ENCODE measurements at regions of chr7 and their contacts with region 1.

Region 1: DNA sequence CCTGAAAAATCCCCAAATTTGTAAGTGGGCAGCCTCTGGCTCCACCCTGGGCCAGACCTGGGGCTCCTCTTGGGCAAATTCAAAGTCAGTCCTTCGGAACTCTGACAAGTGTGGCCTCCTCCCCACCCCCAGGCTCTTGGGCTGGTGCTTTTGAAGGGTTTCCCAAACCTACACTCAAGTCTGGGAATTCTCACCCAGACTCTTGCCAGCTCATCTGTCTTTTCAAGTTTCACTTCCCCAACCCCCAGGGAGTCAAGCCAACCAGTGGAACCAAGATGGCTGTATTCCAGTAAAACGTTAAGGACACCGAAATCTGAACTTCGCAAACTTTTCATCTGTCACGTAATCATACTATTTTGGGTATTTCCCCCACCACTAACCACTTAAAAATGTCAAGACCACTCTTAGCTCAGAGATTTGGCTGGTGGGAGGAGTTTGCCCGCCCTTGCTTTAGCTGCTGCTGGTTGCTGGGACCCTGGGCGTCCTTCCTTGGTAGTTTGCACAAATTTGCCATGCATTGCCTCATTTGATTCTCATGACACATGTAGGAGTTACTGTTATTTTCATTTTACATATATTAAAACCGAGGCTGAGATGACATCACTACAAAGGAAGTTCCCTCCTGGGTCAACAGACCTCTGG is 1.7 kb upstream of the MYO1G start:
- DNase-seq: peak; percentile 97
- ATAC-seq: peak; percentile 52
- H3K4me3 Mint-ChIP-seq: peak overlapping the region; percentile 100
- H3K27ac Mint-ChIP-seq: peak overlapping the region; percentile 100
- H3K4me1 Mint-ChIP-seq: peaks cover 60% of the 10 kb centered on the region
- H3K27me3 Mint-ChIP-seq: no peaks in the 10 kb centered on the region
- CTCF ChIP-seq: no peak

Region 2: DNA sequence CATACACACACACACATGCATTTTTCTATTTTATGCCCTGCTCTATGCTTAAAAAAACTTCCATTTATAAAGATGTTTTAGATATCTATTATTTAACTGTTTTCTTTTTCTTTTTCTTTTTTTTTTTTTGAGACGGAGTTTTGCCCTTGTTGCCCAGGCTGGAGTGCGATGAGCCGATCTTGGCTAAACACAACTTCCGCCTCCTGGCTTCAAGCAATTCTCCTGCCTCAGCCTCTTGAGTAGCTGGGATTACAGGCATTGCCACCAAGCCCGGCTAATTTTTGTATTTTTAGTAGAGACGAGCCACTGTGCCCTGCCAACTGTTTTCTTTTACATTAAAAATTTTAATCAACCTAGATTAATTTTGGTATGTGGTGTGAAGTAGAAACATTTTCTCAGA is 49.6 kb before region 1 on chr7:
- CTCF ChIA-PET with region 1: no interaction called
- POLR2A ChIA-PET with region 1: no interaction called
- intact Hi-C with region 1: no loop called
- DNase-seq: no peak
- ATAC-seq: no peak
- H3K4me3 Mint-ChIP-seq: no peak overlapping the region
- H3K27ac Mint-ChIP-seq: no peak overlapping the region
- H3K4me1 Mint-ChIP-seq: no peaks in the 10 kb centered on the region
- H3K27me3 Mint-ChIP-seq: peaks cover 3% of the 10 kb centered on the region
- CTCF ChIP-seq: no peak

Region 3: DNA sequence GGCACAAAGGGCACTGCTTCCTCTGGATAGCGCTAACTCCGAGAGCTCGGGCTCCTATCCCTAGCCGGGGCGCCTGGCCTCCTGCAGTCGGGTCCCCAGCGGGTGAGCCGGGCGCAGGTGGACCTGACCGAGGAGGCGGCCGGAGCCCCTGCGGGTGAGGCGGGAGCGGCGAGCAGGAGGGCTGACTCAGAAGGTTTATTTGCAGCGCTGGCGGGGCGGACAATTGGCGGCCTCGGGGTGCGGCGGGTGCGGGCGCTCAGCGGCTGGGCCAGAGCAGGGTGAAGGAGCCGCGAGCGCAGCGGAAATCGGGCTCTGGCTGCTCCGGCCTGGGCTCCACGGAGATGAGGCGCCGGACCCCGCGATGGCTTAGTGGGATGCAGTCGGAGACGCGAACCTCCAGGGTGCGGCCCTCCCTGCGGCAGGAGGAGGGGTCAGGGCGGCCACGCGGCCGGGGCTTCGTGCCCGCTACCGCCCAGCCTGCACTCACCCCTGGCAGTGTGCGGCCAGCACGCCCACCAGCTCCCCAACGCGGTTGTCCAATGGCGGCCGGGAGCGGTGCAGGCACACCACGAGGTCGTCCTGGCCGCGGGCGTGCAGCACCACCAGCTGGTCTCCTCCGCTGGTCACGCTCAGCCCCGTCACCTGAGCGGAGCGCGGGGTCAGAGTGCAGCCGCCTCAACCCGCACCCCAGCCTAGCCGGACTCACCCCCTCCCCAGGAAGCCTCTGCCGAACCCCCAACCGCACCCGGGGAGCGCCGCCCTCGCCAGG is 17.8 kb before region 1 on chr7:
- CTCF ChIA-PET with region 1: interaction called, 4 read pairs
- POLR2A ChIA-PET with region 1: interaction called, 317 read pairs
- intact Hi-C with region 1: no loop called
- DNase-seq: peak; percentile 28
- ATAC-seq: no peak
- H3K4me3 Mint-ChIP-seq: no peak overlapping the region
- H3K27ac Mint-ChIP-seq: no peak overlapping the region
- H3K4me1 Mint-ChIP-seq: peaks cover 19% of the 10 kb centered on the region
- H3K27me3 Mint-ChIP-seq: no peaks in the 10 kb centered on the region
- CTCF ChIP-seq: no peak

Region 4: GRCh38 chr7:45033261-45033930 is 52.9 kb after region 1 on chr7:
- CTCF ChIA-PET with region 1: interaction called, 4 read pairs
- POLR2A ChIA-PET with region 1: interaction called, 30 read pairs
- intact Hi-C with region 1: no loop called
- DNase-seq: peak; percentile 51
- ATAC-seq: peak; percentile 55
- H3K4me3 Mint-ChIP-seq: peak overlapping the region; percentile 11
- H3K27ac Mint-ChIP-seq: peak overlapping the region; percentile 85
- H3K4me1 Mint-ChIP-seq: peaks cover 78% of the 10 kb centered on the region
- H3K27me3 Mint-ChIP-seq: no peaks in the 10 kb centered on the region
- CTCF ChIP-seq: no peak

Region 5: GRCh38 chr7:45157653-45158401 is 177.3 kb after region 1 on chr7 and contains the start of gene RAMP3:
- CTCF ChIA-PET with region 1: no interaction called
- POLR2A ChIA-PET with region 1: no interaction called
- intact Hi-C with region 1: no loop called
- DNase-seq: no peak
- ATAC-seq: no peak
- H3K4me3 Mint-ChIP-seq: no peak within 1 kb of the TSS
- H3K27ac Mint-ChIP-seq: no peak within 1 kb of the TSS
- H3K4me1 Mint-ChIP-seq: peaks cover 2% of the 10 kb centered on the region
- H3K27me3 Mint-ChIP-seq: peaks cover 21% of the 10 kb centered on the region
- CTCF ChIP-seq: no peak
- total RNA-seq, gene RAMP3: not detected

Measured in activated CD8-positive, alpha-beta T cell treated with anti-CD3 and anti-CD28 coated beads for 36 hours (primary cell).